ENCODE measurements at regions of chr2 and their contacts with region 1.

Region 1: DNA sequence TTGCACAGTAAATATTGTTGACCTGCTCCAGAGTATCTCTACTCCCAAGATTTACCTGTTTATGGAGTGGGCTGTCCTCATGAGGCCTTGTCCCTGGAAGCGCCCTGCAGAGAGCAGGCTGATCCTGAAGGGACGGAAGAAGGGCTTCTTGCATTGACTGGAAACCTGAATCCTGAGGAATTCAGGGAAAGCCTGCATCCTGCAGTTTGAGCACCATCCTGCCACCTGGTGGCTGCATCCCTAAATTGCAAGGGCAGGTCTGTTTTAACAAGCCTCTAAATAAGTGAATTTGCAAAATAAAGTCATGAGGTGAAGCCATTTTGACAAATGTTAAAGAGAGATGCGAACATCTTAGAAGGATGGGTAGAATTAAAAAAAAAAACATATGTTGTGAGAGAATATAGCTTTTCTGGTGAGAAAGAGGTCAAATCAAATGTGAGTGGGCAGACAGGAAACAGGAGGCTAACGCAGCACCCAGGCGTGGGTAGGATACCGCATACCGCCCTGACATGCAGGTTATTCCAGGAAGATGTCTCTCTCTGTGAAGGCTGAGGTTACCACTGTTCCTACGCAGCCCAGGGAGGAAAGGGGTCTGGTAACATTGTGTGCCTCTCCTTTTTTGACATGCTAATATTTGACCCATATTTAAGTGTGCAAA is 754.9 kb downstream of the RNF144A start:
- DNase-seq: peak; percentile 85
- H3K4me3 Mint-ChIP-seq: peak overlapping the region; percentile 70
- H3K27ac Mint-ChIP-seq: peak overlapping the region; percentile 98
- H3K4me1 Mint-ChIP-seq: peaks cover 60% of the 10 kb centered on the region
- H3K27me3 Mint-ChIP-seq: no peaks in the 10 kb centered on the region

Region 2: GRCh38 chr2:7097348-7097895 is 574.7 kb before region 1 on chr2:
- intact Hi-C with region 1: loop called (anchors 5 kb)
- DNase-seq: peak; percentile 93
- H3K4me3 Mint-ChIP-seq: peak overlapping the region; percentile 64
- H3K27ac Mint-ChIP-seq: no peak overlapping the region
- H3K4me1 Mint-ChIP-seq: peaks cover 7% of the 10 kb centered on the region
- H3K27me3 Mint-ChIP-seq: no peaks in the 10 kb centered on the region

Region 3: DNA sequence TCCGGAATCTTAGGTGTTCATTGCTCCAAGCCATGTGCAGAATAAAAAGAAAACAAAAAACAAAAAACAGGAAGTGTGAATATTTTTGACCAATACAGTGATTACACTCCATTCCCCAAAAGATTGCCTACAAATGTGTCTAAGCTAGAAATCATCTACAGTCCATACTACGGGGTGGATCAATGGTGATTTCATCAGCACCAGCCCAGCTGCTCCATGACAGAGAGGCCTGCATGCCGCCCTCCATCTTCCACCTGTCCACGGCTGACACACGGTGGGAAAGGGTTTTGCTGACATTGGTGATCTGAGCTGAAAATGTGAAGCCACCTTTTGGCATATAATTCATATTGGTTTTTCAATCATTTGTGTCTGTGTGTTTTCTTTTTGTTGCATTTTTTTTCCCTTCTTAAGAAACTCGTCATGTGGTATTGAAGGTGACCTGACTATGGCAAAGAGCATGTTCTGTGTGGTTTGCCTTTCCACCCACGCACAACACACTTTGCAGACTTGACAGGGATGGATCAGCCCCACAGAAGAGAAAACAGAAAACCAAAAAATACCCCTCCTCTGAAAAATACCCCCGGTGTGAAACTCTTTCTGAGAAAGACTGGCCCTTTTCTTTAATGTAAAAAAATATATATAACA is 221.8 kb before region 1 on chr2:
- intact Hi-C with region 1: loop called (anchors 1 kb)
- DNase-seq: peak; percentile 90
- H3K4me3 Mint-ChIP-seq: peak overlapping the region; percentile 58
- H3K27ac Mint-ChIP-seq: peak overlapping the region; percentile 100
- H3K4me1 Mint-ChIP-seq: peaks cover 70% of the 10 kb centered on the region
- H3K27me3 Mint-ChIP-seq: no peaks in the 10 kb centered on the region

Region 4: GRCh38 chr2:7567646-7568045 is 104.5 kb before region 1 on chr2:
- intact Hi-C with region 1: loop called (anchors 1 kb)
- DNase-seq: peak; percentile 89
- H3K4me3 Mint-ChIP-seq: peak overlapping the region; percentile 65
- H3K27ac Mint-ChIP-seq: peak overlapping the region; percentile 97
- H3K4me1 Mint-ChIP-seq: peaks cover 58% of the 10 kb centered on the region
- H3K27me3 Mint-ChIP-seq: no peaks in the 10 kb centered on the region

Region 5: DNA sequence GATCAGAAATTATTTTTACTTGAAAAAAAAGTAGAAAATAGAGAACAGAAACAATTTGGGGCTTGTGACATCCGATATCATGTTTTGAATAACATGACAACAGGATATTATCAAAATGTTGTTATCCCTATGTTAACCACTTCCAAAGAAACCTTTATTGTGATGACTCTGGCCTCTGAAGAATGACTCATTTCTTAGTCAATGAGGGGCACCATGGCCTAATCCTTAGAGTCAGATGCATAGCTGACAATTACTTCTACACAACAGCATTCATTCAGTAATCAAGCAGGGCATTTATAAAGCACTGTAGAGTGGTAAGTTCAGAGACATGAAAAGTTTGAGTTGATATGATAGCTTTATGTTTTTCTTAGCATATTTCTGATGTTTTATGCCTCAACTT is 51.9 kb before region 1 on chr2:
- intact Hi-C with region 1: loop called (anchors 5 kb)
- DNase-seq: no peak
- H3K4me3 Mint-ChIP-seq: no peak overlapping the region
- H3K27ac Mint-ChIP-seq: no peak overlapping the region
- H3K4me1 Mint-ChIP-seq: peaks cover 12% of the 10 kb centered on the region
- H3K27me3 Mint-ChIP-seq: no peaks in the 10 kb centered on the region

Region 6: GRCh38 chr2:7725171-7725849 is 53.2 kb after region 1 on chr2:
- intact Hi-C with region 1: loop called (anchors 2 kb)
- DNase-seq: peak; percentile 88
- H3K4me3 Mint-ChIP-seq: peak overlapping the region; percentile 87
- H3K27ac Mint-ChIP-seq: peak overlapping the region; percentile 92
- H3K4me1 Mint-ChIP-seq: peaks cover 53% of the 10 kb centered on the region
- H3K27me3 Mint-ChIP-seq: no peaks in the 10 kb centered on the region

Region 7: GRCh38 chr2:7930800-7931635 is 258.9 kb after region 1 on chr2:
- intact Hi-C with region 1: loop called (anchors 10 kb)
- DNase-seq: peak; percentile 54
- H3K4me3 Mint-ChIP-seq: peak overlapping the region; percentile 1
- H3K27ac Mint-ChIP-seq: peak overlapping the region; percentile 76
- H3K4me1 Mint-ChIP-seq: peaks cover 10% of the 10 kb centered on the region
- H3K27me3 Mint-ChIP-seq: no peaks in the 10 kb centered on the region

Measured in activated CD4-positive, alpha-beta T cell treated with anti-CD3 and anti-CD28 coated beads, Interleukin-2, amount 10 ng/mL, durations not matched to agents 24 days and 14 days (primary cell).